ENCODE measurements at regions of chr12 and their contacts with region 1.

Region 1: GRCh38 chr12:128797119-128798118 is 26.3 kb downstream of the SLC15A4 start:
- DNase-seq: no peak
- ATAC-seq: peak; percentile 82
- H3K4me3 ChIP-seq: peak overlapping the region; percentile 5; the same call in 1 of the 2 replicates
- H3K27ac ChIP-seq: peak overlapping the region; percentile 99
- H3K4me1 ChIP-seq: peaks cover 60% of the 10 kb centered on the region
- H3K27me3 ChIP-seq: no peaks in the 10 kb centered on the region
- CTCF ChIP-seq: no peak; a peak in 1 of 6 replicates
- EP300 ChIP-seq: peak in 1 of 2 experiments; percentile 26; a peak in 1 of 4 replicates
- POLR2A ChIP-seq: peak; percentile 39
- RAD21 ChIP-seq: peak; percentile 29; the same call in 1 of the 2 replicates

Region 2: DNA sequence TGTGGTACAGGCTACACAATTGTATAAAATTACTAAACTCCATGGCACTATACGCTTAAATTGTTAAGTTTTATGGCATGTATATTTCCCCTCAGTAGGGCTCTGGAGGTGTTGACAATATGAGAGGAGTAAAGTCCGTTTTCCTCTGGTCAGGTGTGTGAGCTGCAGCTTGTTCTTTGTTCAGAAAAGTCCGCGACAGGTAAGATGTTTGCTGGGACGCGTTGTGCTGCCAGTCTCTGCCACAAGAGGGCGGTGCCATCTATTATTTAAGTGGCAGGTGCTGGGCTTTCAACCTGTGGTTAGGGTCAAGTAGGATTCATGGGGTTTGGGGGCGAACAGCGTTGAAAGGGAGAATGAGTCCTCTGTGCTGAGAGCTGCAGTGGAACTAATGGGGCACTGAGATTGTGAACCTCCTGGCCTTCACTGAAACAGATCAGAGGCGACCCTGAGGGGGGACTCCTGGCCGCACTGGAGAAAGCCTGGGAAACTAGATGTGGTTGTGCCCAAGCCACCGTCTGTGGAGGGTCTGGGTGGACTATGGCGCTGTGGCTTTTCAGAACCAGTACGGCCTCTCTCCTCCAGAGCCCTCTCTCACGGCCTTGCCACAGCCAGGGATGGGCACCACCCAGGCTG is 152.6 kb before region 1 on chr12:
- CTCF ChIA-PET with region 1: no interaction called
- POLR2A ChIA-PET with region 1: no interaction called
- RAD21 ChIA-PET with region 1: no interaction called
- SMC1A ChIA-PET with region 1: no interaction called
- in situ Hi-C with region 1: no loop called
- intact Hi-C with region 1: loop called (anchors 10 kb)
- DNase-seq: no peak
- ATAC-seq: peak; percentile 64
- H3K4me3 ChIP-seq: no peak overlapping the region
- H3K27ac ChIP-seq: no peak overlapping the region
- H3K4me1 ChIP-seq: no peaks in the 10 kb centered on the region
- H3K27me3 ChIP-seq: no peaks in the 10 kb centered on the region
- CTCF ChIP-seq: peak; percentile 81 to 83 (median 83)
- EP300 ChIP-seq: no peak
- POLR2A ChIP-seq: no peak
- RAD21 ChIP-seq: peak; percentile 76

Region 3: DNA sequence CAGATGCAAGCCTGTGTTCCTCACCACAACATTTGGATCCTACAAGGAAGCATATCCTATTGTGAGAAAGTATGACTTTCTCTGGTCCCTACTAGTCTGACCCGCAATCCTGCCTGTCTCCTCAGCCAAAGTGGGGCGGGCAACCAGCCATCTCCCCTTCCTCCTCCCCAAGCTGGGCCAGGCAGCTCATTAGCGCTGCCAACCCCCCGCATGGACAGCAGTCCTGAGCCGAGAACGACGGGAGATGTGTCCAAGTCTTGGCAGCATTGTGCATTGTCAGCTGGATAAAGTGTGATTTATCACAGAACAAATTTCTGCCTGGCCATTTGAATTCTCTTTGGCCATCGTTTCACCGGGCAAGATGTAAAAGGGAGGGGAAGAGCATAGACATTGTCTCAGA is 113.1 kb before region 1 on chr12:
- CTCF ChIA-PET with region 1: no interaction called
- POLR2A ChIA-PET with region 1: no interaction called
- RAD21 ChIA-PET with region 1: no interaction called
- SMC1A ChIA-PET with region 1: no interaction called
- in situ Hi-C with region 1: no loop called
- intact Hi-C with region 1: no loop called
- DNase-seq: no peak
- ATAC-seq: no peak
- H3K4me3 ChIP-seq: no peak overlapping the region
- H3K27ac ChIP-seq: no peak overlapping the region
- H3K4me1 ChIP-seq: no peaks in the 10 kb centered on the region
- H3K27me3 ChIP-seq: no peaks in the 10 kb centered on the region
- CTCF ChIP-seq: no peak
- EP300 ChIP-seq: no peak
- POLR2A ChIP-seq: no peak
- RAD21 ChIP-seq: no peak

Region 4: DNA sequence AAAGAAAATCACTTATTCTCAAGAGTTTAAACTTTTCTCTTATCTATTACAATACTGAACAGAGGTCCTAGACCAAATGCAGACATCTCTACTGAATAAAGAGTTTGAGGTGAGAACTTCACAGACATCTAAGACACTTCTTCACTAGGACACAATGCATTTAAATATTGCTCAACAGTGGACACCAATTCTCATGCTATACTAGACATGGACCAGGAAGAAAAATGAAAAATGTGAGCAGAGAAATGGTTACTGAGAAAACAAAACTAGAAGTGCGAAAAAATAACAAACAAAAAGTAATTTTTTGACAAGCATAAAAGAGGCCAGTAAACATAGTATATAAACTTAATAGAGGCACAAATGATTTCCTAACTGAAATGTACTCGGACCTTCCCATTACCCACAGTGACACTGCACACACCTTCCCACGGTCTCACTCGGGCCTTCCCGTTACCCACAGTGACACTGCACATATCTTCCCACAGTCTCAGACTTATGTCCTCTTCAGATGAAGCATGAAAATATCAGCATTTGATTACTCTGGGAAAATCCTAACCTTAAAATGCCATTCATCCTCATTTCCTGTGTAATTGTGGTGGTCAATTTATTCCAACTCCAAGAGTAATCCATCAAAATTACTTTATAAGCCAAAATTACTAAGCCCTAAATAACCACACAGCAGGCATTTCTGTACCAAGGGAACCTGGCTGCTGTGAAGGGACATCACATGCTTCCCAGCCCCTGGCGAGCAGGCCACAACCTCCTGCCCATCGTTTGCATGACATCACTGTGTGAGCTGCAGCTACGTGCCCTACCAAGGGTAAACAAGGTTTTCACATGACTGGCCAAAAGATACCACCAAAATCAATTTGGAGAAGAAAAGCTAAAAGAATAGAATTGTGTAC is 19.9 kb after region 1 on chr12:
- CTCF ChIA-PET with region 1: interaction called, 51 read pairs
- POLR2A ChIA-PET with region 1: interaction called, 253 read pairs
- RAD21 ChIA-PET with region 1: interaction called, 209 read pairs
- SMC1A ChIA-PET with region 1: interaction called, 261 read pairs
- in situ Hi-C with region 1: no loop called
- intact Hi-C with region 1: loop called (anchors 1 kb)
- DNase-seq: peak; percentile 90
- ATAC-seq: peak; percentile 42
- H3K4me3 ChIP-seq: peak overlapping the region; percentile 98
- H3K27ac ChIP-seq: peak overlapping the region; percentile 94
- H3K4me1 ChIP-seq: peaks cover 70% of the 10 kb centered on the region
- H3K27me3 ChIP-seq: no peaks in the 10 kb centered on the region
- CTCF ChIP-seq: no peak
- EP300 ChIP-seq: peak in 1 of 2 experiments; percentile 10; a peak in 2 of 4 replicates
- POLR2A ChIP-seq: peak; percentile 54
- RAD21 ChIP-seq: no peak

Measured in GM12878 (cell line).